Panc1 (cell line): ENCODE measurements at regions of chr6 and their contacts with region 1.

Region 1: DNA sequence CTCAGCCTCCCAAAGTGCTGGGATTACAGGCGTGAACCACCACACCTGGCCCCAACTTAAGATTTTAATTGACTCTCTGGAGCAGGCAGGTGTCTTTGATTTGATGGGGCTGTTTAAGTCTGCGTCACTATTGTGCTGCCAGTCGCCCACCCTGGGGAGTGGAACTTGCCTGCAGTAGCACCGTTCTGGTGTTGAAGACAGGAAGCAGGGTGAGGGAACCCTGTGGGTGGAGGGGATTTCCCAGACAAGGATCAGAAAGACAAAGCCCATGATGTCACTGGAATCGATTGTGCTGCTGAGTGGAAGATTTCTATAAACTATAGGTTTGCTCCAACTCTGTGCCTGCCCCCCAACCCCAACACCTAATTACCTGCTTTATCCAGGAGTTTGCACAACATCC is 11.0 kb downstream of the ALDH8A1 start:
- DNase-seq: no peak
- ATAC-seq: no peak
- H3K4me3 ChIP-seq: no peak overlapping the region
- H3K27ac ChIP-seq: no peak overlapping the region
- H3K4me1 ChIP-seq: peaks cover 2% of the 10 kb centered on the region; the same call in 1 of the 2 replicates
- H3K27me3 ChIP-seq: no peaks in the 10 kb centered on the region
- CTCF ChIP-seq: no peak

Region 2: DNA sequence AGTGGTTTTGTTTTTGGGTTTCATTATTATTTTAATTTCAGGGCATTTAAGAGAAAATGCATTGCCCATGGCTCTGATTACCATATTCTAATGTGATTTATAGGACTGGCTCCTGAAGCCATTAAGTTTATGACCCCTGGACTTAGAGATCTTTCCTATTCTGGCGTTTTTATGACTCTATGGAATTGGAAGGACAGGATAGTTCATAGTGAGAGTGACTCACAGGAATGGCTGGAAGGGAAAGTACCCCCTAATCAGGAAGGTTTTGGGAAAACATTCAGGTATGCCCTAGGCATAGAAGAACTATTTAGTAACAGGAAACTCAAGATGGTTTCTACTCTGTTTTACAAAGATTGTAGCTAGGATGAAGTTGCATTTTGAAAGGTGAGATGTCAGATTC is 777.9 kb before region 1 on chr6:
- CTCF ChIA-PET with region 1: no interaction called
- POLR2A ChIA-PET with region 1: no interaction called
- in situ Hi-C with region 1: no loop called
- intact Hi-C with region 1: loop called (anchors 5 kb)
- DNase-seq: no peak
- ATAC-seq: 0 out of 2 replicates have a peak, but pooled peaks have one; percentile 42
- H3K4me3 ChIP-seq: no peak overlapping the region
- H3K27ac ChIP-seq: no peak overlapping the region
- H3K4me1 ChIP-seq: no peaks in the 10 kb centered on the region
- H3K27me3 ChIP-seq: no peaks in the 10 kb centered on the region
- CTCF ChIP-seq: no peak